ENCODE measurements at regions of chr14 and their contacts with region 1.

Region 1: DNA sequence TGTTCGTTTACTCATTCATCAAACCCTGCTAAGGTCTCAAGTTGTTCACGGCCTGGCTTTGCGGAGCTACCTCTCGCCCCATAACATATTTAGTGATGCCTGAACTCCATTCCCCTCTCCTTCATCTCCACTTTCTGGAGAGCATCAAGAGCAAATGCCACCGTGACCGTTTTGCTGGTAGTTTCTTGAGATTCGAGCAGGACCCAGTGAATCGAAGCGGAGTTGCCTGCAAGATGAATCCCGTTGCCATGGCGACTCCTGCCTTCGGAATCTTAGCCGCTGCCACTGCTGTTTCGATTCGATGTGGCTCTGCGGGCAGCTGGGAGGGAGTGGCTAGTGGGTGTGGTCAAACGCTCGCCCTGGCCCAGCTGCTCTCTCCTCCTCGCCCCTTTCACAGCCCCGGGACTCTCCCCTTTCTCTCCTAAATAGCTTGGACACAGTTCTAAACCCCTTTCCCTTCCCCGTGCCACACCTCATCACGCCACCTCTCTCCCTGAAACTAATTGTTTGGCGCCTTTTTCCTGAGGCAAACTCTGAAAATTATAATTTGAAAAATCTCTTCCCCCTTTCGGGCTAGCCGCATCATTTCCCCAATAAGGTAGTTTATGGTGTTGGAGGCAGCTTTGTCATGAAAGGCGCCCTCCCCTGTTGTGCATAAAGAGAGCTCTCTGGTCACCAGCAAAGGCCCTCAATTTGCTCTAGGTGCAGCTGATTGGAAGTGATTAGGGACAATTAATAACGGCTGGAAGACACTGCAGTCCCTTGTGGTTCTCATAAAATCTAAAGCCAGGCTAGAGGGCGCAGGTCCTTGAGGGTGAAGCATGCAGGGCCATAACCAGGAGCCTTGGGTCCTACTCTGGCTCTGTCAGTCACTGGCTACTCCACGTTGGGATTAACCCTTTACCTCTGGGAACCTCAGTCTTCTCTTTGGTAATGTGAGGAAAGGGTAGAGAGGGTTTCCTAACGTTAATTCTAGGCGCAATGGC is 1.6 kb downstream of the DAAM1 start:
- DNase-seq: peak; percentile 83 to 91 (median 85)
- ATAC-seq: peak in 3 of 4 donors; percentile 31 to 36 (median 31)
- H3K4me3 ChIP-seq: peak overlapping the region; percentile 70 to 95 (median 86)
- H3K27ac ChIP-seq: peak overlapping the region; percentile 87 to 97 (median 94)
- H3K4me1 ChIP-seq: peaks cover 0 to 58% (median 45%) of the 10 kb centered on the region in 12 donors
- H3K27me3 ChIP-seq: peaks cover 0 to 3% (median 0%) of the 10 kb centered on the region in 9 donors
- CTCF ChIP-seq: peak in 3 of 12 donors; percentile 7 to 33 (median 26)
- POLR2A ChIP-seq: no peak

Region 2: GRCh38 chr14:59140106-59140843 is 49.8 kb before region 1 on chr14:
- intact Hi-C with region 1: loop called in 1 of 10 experiments (anchors 5 kb)
- DNase-seq: no peak
- ATAC-seq: no peak
- H3K4me3 ChIP-seq: no peak overlapping the region
- H3K27ac ChIP-seq: no peak overlapping the region
- H3K4me1 ChIP-seq: no peaks in the 10 kb centered on the region
- H3K27me3 ChIP-seq: no peaks in the 10 kb centered on the region
- CTCF ChIP-seq: no peak
- POLR2A ChIP-seq: no peak

Region 3: DNA sequence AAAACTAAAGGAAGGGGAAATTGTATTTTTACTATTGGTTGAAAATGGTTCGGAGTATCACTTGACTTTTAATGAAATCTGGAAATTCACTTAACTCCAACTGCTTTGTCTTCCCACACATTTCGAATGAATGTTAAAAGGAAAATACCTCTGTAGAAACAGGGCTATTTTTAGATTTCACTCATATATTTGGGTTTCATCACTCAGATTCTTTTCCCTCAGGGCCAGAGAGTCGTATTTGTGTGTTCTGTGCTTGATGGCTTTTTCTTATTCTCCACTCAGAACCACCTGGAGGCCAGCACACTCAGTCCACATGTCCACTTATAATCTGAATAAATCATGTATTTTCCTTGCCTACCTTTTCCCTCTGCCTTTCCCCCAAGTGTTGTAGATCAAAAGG is 38.3 kb after region 1 on chr14:
- intact Hi-C with region 1: no loop called
- DNase-seq: no peak
- ATAC-seq: peak in 1 of 4 donors; percentile 21
- H3K4me3 ChIP-seq: no peak overlapping the region
- H3K27ac ChIP-seq: peak overlapping the region in 8 of 12 donors; percentile 3 to 66 (median 62)
- H3K4me1 ChIP-seq: peaks cover 4 to 83% (median 50%) of the 10 kb centered on the region in 12 donors
- H3K27me3 ChIP-seq: no peaks in the 10 kb centered on the region
- CTCF ChIP-seq: no peak
- POLR2A ChIP-seq: no peak

Region 4: DNA sequence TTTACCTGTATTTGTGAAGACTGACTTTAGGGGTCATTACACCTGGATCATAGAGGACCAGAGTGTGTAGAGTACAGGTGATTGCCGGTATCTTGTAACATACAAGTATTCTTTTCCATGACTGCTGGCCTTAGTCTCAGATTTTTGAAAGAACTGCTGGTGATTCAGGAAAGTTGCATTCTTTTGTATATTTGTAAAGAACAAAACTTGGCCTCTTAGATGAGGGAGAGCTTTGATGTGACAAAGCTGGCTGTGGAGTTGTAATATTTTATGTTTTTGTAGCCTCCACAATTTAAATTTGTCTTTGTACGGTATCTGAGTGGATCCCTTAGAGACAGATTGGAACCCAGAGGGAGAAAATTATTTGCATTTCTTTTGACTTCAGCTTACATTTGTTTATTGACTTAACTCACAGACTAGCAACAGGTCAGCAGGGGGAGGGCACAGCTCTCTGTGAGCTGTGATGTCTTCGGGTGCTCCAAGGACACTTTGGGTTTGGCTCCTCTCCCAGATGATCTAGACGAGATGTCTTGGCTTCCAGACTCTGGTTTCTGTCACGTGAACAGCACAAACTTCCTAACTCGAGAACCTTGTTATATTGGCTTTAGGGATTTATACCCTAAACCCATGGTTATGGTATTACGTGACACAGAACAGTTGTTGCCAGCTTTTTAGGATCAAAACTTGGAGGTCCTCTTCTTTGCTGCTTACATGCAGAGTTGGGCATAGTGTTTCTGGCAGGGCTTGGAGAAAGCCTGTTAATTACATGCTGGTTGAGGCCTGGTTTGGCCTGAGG is 64.3 kb after region 1 on chr14:
- intact Hi-C with region 1: loop called in 9 of 10 experiments (anchors 2 to 10 kb)
- DNase-seq: peak; percentile 70 to 87 (median 86)
- ATAC-seq: peak; percentile 81 to 92 (median 90)
- H3K4me3 ChIP-seq: no peak overlapping the region
- H3K27ac ChIP-seq: peak overlapping the region; percentile 72 to 93 (median 86)
- H3K4me1 ChIP-seq: peaks cover 19 to 78% (median 63%) of the 10 kb centered on the region in 12 donors
- H3K27me3 ChIP-seq: no peaks in the 10 kb centered on the region
- CTCF ChIP-seq: peak in 3 of 12 donors; percentile 11 to 40 (median 20)
- POLR2A ChIP-seq: no peak

Region 5: DNA sequence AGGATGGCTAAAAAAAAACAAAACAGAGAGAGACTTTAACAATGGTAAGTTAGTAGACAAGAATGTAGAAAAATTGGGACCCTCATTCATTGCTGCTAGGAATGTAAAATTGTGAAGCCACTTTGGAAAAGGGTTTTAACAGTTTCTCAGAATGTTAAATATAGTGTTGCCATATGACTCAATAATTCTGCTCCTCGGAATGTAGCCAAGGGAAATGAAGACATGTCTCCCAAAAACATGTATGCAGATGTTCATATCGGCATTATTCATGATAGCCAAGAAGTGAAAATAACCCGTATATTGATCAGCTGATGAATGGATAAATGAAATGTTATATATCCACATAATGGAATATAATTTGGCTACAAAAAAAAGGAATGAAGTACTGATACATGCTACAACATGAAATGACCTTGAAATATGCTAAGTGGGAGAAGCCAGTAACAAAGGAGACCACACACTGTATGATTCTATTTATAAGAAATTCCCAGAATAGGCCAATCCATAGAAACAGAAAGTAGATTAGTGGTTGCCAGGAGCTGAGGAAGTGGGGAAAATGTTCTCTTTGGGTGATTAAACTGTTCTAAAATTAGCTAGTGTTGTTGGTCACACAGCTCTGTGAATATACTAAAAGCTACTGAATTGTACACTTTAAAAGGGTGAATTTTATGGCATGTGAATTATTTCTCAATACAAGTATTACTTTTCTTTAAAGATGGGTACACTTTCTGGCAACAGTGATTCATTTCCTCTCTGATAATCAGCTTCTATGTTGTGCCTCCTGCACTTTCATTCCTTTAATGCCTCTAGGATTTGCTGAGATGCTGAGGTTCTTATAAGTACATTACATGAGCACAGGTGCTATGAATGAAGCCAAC is 130.9 kb after region 1 on chr14:
- intact Hi-C with region 1: loop called in 3 of 10 experiments (anchors 5 to 10 kb)
- DNase-seq: no peak
- ATAC-seq: peak; percentile 27 to 84 (median 76)
- H3K4me3 ChIP-seq: peak overlapping the region in 1 of 12 donors; percentile 12
- H3K27ac ChIP-seq: peak overlapping the region; percentile 68 to 90 (median 79)
- H3K4me1 ChIP-seq: peaks cover 6 to 72% (median 58%) of the 10 kb centered on the region in 12 donors
- H3K27me3 ChIP-seq: no peaks in the 10 kb centered on the region
- CTCF ChIP-seq: no peak
- POLR2A ChIP-seq: no peak

Region 6: GRCh38 chr14:59422069-59422881 is 232.2 kb after region 1 on chr14:
- intact Hi-C with region 1: loop called in 7 of 10 experiments (anchors 5 to 10 kb)
- DNase-seq: no peak
- ATAC-seq: peak in 2 of 4 donors; percentile 10 to 14
- H3K4me3 ChIP-seq: no peak overlapping the region
- H3K27ac ChIP-seq: peak overlapping the region in 6 of 12 donors; percentile 3 to 51 (median 18)
- H3K4me1 ChIP-seq: peaks cover 0 to 65% (median 36%) of the 10 kb centered on the region in 12 donors
- H3K27me3 ChIP-seq: no peaks in the 10 kb centered on the region
- CTCF ChIP-seq: peak in 8 of 12 donors; percentile 13 to 55 (median 28)
- POLR2A ChIP-seq: no peak